H1 (cell line): ENCODE measurements at regions of chr11 and their contacts with region 1.

Region 1: GRCh38 chr11:70661761-70662501 is 263.6 kb downstream of the CTTN start:
- DNase-seq: peak in 1 of 2 experiments; percentile 77
- H3K4me3 ChIP-seq: peak overlapping the region; percentile 28 to 66 (median 52)
- H3K27ac ChIP-seq: no peak overlapping the region
- H3K4me1 ChIP-seq: peaks cover 6 to 27% (median 19%) of the 10 kb centered on the region in 4 experiments
- H3K27me3 ChIP-seq: no peaks in the 10 kb centered on the region; a peak in 1 of 7 replicates
- CTCF ChIP-seq: no peak
- EP300 ChIP-seq: no peak
- POLR2A ChIP-seq: peak in 1 of 2 experiments; percentile 61; a peak in 2 of 3 replicates
- RAD21 ChIP-seq: no peak

Region 2: DNA sequence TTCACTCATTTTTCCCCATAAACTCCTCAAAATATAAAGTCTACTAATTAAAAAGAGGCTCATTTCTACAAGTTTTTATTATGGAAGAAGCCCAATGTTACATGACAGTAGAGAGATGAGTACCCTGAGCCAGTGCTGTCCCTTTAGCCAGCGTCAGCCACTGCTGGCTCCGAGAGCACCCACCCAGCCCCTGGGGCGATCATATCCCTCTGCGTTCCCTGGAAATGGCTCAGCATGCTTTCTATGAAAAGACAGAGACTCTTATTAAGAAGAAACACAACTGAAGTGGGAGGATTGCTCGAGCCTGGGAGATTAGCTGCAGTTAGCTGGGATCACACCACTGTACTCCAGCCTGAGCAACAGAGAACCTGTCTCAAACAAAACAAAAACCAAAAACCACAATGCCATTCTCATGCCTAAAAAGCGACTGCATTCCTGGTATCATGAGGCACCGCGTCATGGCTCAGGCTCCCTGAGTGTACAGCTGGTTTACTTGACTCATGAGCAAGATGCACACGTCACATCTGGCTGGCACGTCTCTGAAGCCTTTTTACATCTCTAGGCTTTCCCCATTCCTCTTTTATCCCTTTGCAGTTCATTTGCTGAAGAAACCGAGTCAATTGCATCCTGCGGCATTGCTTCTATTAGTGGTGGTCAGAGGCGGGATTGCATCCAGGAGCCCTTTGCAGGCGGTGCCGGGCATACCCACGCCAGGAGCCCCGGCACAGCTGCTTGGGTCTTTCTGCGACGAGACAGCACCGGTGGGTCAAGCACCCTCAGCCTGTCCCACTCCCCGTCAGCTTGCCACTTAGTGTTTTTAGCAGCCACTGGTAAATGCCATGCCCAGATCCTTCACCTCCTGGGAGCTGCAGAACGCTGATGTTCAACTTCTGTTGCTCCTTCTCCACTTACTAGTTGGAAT is 143.7 kb before region 1 on chr11:
- CTCF ChIA-PET with region 1: no interaction called
- POLR2A ChIA-PET with region 1: no interaction called
- DNase-seq: no peak
- H3K4me3 ChIP-seq: no peak overlapping the region
- H3K27ac ChIP-seq: no peak overlapping the region
- H3K4me1 ChIP-seq: peaks cover 0 to 14% (median 8%) of the 10 kb centered on the region in 4 experiments; a peak in 6 of 7 replicates
- H3K27me3 ChIP-seq: no peaks in the 10 kb centered on the region; a peak in 1 of 7 replicates
- CTCF ChIP-seq: peak in 2 of 3 experiments; percentile 11 to 14; a peak in 2 of 4 replicates
- EP300 ChIP-seq: no peak
- POLR2A ChIP-seq: no peak
- RAD21 ChIP-seq: peak in 1 of 2 experiments; percentile 3; a peak in 1 of 4 replicates

Region 3: DNA sequence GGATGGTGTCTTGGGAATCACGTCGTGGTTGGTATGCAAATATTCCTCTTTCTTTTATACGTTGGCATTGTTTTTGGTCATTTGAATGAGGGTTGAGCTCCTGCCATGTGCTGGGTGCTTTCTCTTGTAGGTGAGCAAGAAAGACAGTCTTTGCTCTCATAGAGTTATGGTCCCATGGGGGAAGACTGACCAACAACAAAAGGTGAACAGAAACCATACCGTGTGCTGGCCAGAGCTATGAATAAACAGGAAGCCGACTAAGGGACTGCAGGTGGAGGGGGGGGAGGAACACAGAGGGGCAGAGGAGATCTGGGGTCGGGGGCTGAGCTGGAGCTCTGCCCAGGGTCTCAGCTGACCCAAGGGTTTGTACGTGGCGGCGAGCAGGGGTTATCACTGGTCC is 18.3 kb before region 1 on chr11:
- CTCF ChIA-PET with region 1: interaction called, 3 read pairs
- POLR2A ChIA-PET with region 1: interaction called, 25 read pairs
- DNase-seq: no peak
- H3K4me3 ChIP-seq: peak overlapping the region in 1 of 4 experiments; percentile 8; a peak in 1 of 8 replicates
- H3K27ac ChIP-seq: 0 out of 2 replicates have a peak overlapping the region, but pooled peaks have one; percentile 19
- H3K4me1 ChIP-seq: peaks cover 30 to 48% (median 41%) of the 10 kb centered on the region in 4 experiments
- H3K27me3 ChIP-seq: no peaks in the 10 kb centered on the region
- CTCF ChIP-seq: no peak
- EP300 ChIP-seq: no peak
- POLR2A ChIP-seq: no peak
- RAD21 ChIP-seq: no peak